ENCODE measurements at regions of chr14 and their contacts with region 1.

Region 1: DNA sequence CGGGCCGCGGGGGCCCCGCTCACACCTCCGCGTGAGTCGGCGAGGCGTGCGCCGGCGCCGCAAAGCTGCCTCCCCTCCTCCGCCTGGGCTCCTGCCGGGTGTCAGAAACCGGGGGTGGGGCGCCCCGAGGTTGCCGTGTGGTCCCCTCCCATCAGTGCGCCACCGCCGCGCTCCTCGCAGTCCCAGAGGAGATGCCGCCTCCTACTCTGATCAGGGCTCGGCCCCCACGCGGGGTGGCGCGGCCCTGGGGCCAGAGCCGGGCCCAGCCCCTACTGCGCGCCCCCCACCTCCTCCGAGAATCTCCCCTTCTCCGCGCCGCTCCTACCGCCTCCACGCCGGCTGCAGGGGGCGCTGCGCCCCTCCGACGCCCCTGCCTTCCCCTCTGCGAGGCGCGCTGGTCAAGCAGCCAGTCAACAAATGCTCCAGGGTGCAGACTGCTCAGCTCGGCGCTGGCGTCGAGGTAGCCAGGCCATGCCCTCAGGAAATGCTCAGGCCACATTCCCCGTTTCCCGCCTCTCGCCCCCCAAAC is 467 bp upstream of the JAG2 start:
- DNase-seq: no peak
- ATAC-seq: peak; percentile 52
- H3K4me3 ChIP-seq: peak overlapping the region; percentile 19 to 48
- H3K27ac ChIP-seq: peak overlapping the region; percentile 50; the same call in 1 of the 2 replicates
- H3K4me1 ChIP-seq: peaks cover 45 to 62% of the 10 kb centered on the region in 2 experiments
- H3K27me3 ChIP-seq: no peaks in the 10 kb centered on the region
- CTCF ChIP-seq: peak in 2 of 3 experiments; percentile 58 to 60; a peak in 4 of 6 replicates
- POLR2A ChIP-seq: no peak
- RAD21 ChIP-seq: no peak

Region 2: DNA sequence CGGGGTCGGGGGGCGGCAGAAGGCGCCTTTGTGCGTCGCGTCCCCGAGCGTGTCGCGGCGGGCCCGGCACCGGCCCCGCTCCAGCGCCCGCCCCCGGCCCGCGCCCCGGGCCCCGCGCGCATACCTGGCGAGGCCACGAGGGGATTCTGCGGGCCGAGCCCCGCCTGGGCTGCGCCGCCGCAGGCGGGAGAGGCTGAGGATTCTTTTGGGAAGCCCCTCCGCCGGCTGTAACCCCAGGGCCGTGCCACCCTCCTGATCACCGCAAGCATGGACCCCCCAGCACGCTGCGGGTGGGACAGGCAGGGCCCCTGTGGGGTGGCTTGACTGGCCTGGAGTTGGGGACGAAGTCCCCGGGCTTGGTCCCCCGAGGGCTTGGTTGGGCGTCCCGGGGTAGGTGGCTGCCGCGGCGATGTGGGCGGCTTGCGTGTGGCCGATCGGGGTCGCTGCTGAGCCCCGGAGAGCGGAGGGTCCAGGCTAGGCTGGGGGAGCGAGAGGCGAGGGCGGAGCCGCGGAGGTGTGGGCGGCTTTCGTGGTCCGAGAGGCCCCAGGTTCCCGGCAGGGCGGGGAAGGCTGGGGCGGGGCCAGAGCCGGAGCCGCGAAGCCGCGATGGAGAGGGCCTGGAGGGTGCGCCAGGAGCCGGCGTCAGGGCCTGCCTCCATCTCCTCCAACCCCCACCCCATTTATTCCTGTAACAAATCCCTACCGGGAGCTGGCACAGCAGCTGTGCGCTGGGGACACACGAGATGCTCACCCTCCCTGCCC is 75.4 kb before region 1 on chr14:
- CTCF ChIA-PET with region 1: interaction called, 10 read pairs
- POLR2A ChIA-PET with region 1: interaction called, 3 read pairs
- RAD21 ChIA-PET with region 1: no interaction called
- intact Hi-C with region 1: loop called (anchors 2 kb)
- DNase-seq: peak; percentile 77
- ATAC-seq: peak; percentile 68
- H3K4me3 ChIP-seq: peak overlapping the region; percentile 72 to 87
- H3K27ac ChIP-seq: peak overlapping the region; percentile 99
- H3K4me1 ChIP-seq: peaks cover 53 to 64% of the 10 kb centered on the region in 2 experiments
- H3K27me3 ChIP-seq: no peaks in the 10 kb centered on the region
- CTCF ChIP-seq: peak in 2 of 3 experiments; percentile 59 to 66; a peak in 4 of 6 replicates
- POLR2A ChIP-seq: no peak
- RAD21 ChIP-seq: no peak